ENCODE measurements at regions of chr7 and their contacts with region 1.

Region 1: GRCh38 chr7:2104107-2104710 is 128.5 kb downstream of the MAD1L1 start:
- DNase-seq: peak; percentile 50 to 90 (median 72)
- ATAC-seq: peak; percentile 79
- H3K4me3 ChIP-seq: peak overlapping the region in 1 of 2 experiments; percentile 0
- H3K4me3 Mint-ChIP-seq: peak overlapping the region; percentile 59
- H3K27ac ChIP-seq: no peak overlapping the region
- H3K27ac Mint-ChIP-seq: peak overlapping the region; percentile 76
- H3K4me1 ChIP-seq: peaks cover 25% of the 10 kb centered on the region
- H3K4me1 Mint-ChIP-seq: peaks cover 33% of the 10 kb centered on the region
- H3K27me3 ChIP-seq: no peaks in the 10 kb centered on the region
- H3K27me3 Mint-ChIP-seq: no peaks in the 10 kb centered on the region
- CTCF ChIP-seq: peak; percentile 43

Region 2: DNA sequence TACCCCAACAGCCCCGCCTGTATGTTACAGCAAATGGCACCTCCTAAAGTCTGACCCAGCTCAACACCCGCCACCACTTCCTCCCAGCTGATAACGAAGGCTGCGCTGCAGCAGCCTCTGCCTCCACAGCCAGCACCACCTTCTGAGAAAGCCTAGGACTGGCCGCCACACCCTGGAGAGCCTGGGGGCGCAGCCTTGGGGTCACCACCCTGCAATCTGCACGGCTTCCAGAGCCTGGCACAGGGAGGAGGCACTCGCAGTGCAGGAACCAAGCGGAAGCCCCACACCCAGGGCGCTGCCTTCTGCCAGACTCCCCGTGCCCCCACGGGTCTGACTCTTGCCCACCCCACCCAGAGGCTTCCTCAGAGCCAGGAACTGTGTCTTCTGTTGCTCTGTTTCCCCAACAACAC is 16.0 kb after region 1 on chr7:
- CTCF ChIA-PET with region 1: interaction called, 18 read pairs
- POLR2A ChIA-PET with region 1: no interaction called
- intact Hi-C with region 1: loop called in 1 of 2 experiments (anchors 2 kb)
- DNase-seq: peak; percentile 36 to 85 (median 66)
- ATAC-seq: peak; percentile 92
- H3K4me3 ChIP-seq: peak overlapping the region; percentile 19 to 39
- H3K4me3 Mint-ChIP-seq: peak overlapping the region; percentile 75
- H3K27ac ChIP-seq: peak overlapping the region; percentile 4 to 66
- H3K27ac Mint-ChIP-seq: peak overlapping the region; percentile 97
- H3K4me1 ChIP-seq: peaks cover 34% of the 10 kb centered on the region
- H3K4me1 Mint-ChIP-seq: peaks cover 47% of the 10 kb centered on the region
- H3K27me3 ChIP-seq: no peaks in the 10 kb centered on the region
- H3K27me3 Mint-ChIP-seq: no peaks in the 10 kb centered on the region
- CTCF ChIP-seq: no peak

Region 3: DNA sequence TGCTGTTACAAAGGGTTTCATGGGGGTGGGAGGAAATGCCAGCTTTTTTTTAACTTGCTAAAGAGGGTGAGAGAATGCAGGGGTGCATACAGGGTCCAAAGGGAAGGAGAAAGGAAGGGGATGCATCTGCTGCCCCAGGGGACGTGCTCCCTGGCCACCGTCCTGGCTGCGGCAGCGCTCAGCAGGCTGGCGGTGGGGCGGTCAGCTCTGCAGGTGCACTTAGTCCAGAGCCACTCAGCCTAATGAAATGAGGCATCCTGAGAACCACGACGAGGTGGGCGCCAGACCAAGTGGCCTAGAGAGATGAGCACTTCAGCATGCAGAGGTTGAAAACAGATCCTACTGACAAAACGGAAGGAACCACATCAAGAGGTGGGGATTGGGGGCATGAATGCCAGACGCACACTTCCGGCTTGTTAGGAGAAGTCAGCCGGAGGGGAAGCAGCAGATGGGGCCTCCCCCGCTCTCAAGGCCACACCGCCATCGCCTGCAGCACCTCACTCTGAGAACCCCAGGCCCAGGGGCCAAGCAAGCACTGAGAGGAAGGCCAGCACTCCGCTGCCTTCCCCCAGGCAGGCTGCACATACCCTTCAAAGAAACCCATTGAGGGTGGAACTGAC is 34.0 kb after region 1 on chr7:
- CTCF ChIA-PET with region 1: no interaction called
- POLR2A ChIA-PET with region 1: no interaction called
- intact Hi-C with region 1: loop called in 1 of 2 experiments (anchors 2 kb)
- DNase-seq: peak; percentile 46 to 82 (median 65)
- ATAC-seq: peak; percentile 92
- H3K4me3 ChIP-seq: peak overlapping the region; percentile 26 to 46
- H3K4me3 Mint-ChIP-seq: peak overlapping the region; percentile 71
- H3K27ac ChIP-seq: peak overlapping the region; percentile 50 to 52
- H3K27ac Mint-ChIP-seq: peak overlapping the region; percentile 89
- H3K4me1 ChIP-seq: peaks cover 15% of the 10 kb centered on the region
- H3K4me1 Mint-ChIP-seq: peaks cover 11% of the 10 kb centered on the region
- H3K27me3 ChIP-seq: no peaks in the 10 kb centered on the region
- H3K27me3 Mint-ChIP-seq: no peaks in the 10 kb centered on the region
- CTCF ChIP-seq: no peak

Region 4: DNA sequence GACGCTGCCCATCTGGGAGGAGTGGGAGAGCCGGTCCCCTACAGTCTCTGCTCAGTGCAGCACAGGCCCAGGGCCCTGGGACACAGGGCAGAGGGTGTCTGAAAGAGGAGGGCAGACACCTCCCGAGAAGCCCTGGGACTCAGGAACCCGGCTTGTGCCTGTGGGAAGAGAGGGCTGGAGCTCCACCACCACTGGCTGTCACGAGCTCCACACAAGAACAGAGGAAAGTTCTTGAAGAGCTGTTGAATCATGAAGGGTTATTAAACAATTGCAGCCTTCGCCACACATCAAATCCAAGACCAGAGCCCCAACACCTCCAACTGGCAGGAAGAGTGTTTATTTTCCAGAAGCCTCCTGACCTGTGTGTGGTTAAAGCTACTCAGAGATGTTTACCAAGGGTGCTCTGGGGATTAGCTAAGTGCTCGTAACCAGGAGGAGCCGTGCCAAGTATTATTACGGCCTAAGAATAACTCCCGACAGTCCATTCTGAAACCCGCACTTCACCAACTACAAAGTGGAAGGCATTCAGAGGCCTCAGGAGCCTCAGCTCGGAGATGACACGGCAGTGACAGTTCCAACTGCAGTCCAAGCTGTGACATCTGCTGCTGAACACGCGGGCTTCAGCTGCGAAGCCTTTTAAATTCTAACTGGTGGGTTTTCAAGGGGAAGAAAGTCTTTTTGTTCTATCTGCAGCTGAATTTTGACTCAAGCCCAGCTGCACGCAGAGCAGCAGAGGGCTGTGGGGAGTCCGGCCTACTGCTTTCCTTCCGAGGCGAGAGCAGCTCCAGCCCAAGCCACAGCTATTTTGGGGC is 53.5 kb after region 1 on chr7:
- CTCF ChIA-PET with region 1: no interaction called
- POLR2A ChIA-PET with region 1: interaction called, 3 read pairs
- intact Hi-C with region 1: loop called in 1 of 2 experiments (anchors 5 kb)
- DNase-seq: no peak
- ATAC-seq: no peak
- H3K4me3 ChIP-seq: no peak overlapping the region
- H3K4me3 Mint-ChIP-seq: no peak overlapping the region
- H3K27ac ChIP-seq: no peak overlapping the region
- H3K27ac Mint-ChIP-seq: no peak overlapping the region
- H3K4me1 ChIP-seq: no peaks in the 10 kb centered on the region
- H3K4me1 Mint-ChIP-seq: no peaks in the 10 kb centered on the region
- H3K27me3 ChIP-seq: no peaks in the 10 kb centered on the region
- H3K27me3 Mint-ChIP-seq: no peaks in the 10 kb centered on the region
- CTCF ChIP-seq: no peak

Region 5: GRCh38 chr7:2209146-2209960 is 105.1 kb after region 1 on chr7:
- CTCF ChIA-PET with region 1: interaction called, 3 read pairs
- POLR2A ChIA-PET with region 1: no interaction called
- intact Hi-C with region 1: loop called in 1 of 2 experiments (anchors 2 kb)
- DNase-seq: peak; percentile 14 to 67 (median 46)
- ATAC-seq: peak; percentile 52
- H3K4me3 ChIP-seq: no peak overlapping the region
- H3K4me3 Mint-ChIP-seq: no peak overlapping the region
- H3K27ac ChIP-seq: no peak overlapping the region
- H3K27ac Mint-ChIP-seq: no peak overlapping the region
- H3K4me1 ChIP-seq: no peaks in the 10 kb centered on the region
- H3K4me1 Mint-ChIP-seq: no peaks in the 10 kb centered on the region
- H3K27me3 ChIP-seq: no peaks in the 10 kb centered on the region
- H3K27me3 Mint-ChIP-seq: no peaks in the 10 kb centered on the region
- CTCF ChIP-seq: no peak

Region 6: GRCh38 chr7:2321020-2321419 is 216.8 kb after region 1 on chr7:
- CTCF ChIA-PET with region 1: no interaction called
- POLR2A ChIA-PET with region 1: no interaction called
- intact Hi-C with region 1: no loop called
- DNase-seq: no peak
- ATAC-seq: no peak
- H3K4me3 ChIP-seq: no peak overlapping the region
- H3K4me3 Mint-ChIP-seq: no peak overlapping the region
- H3K27ac ChIP-seq: no peak overlapping the region
- H3K27ac Mint-ChIP-seq: no peak overlapping the region
- H3K4me1 ChIP-seq: no peaks in the 10 kb centered on the region
- H3K4me1 Mint-ChIP-seq: no peaks in the 10 kb centered on the region
- H3K27me3 ChIP-seq: peaks cover 0 to 3% of the 10 kb centered on the region in 2 experiments
- H3K27me3 Mint-ChIP-seq: peaks cover 5% of the 10 kb centered on the region
- CTCF ChIP-seq: no peak

Region 7: DNA sequence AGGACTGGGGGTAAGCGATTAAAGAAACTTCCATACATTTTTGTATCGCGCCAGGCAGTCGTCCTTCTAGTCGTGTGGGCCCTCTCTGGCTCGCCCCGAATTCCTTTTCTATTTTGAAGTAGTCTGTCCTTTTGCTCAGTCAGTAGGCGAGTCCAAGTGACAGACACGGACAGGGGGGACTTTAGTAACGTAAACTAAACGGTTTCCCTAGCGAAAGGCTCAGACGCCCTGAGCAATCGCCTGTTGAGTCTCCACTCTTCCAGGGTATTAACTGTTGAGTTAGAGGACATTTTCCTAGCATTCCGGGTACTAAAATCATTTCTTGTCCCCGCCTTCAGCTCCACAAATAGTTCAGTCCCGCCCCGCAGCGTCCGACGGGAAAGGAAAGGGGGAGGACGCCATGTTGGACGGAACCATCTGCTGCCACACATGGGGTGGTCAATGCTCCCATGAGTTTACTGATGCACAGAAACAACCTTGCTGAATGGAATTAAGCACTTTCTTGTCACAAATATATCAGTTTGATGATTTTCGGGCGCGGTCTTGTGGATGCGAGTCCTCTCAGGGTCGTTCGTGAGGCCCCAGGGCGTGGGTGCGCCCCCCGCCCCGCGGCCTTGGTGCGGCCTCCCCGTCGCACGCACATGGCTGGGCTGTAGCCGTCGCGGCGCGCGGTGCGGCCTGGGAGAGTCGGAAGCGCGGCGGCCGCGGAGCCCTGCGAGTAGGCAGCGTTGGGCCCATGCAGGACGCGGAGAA is 250.2 kb after region 1 on chr7 and contains the start of gene EIF3B:
- CTCF ChIA-PET with region 1: no interaction called
- POLR2A ChIA-PET with region 1: no interaction called
- intact Hi-C with region 1: loop called in 1 of 2 experiments (anchors 2 kb)
- DNase-seq: peak; percentile 80 to 97 (median 90)
- ATAC-seq: peak; percentile 84
- H3K4me3 ChIP-seq: peak within 1 kb of the TSS; percentile 72 to 74
- H3K4me3 Mint-ChIP-seq: peak within 1 kb of the TSS; percentile 88
- H3K27ac ChIP-seq: peak within 1 kb of the TSS; percentile 99
- H3K27ac Mint-ChIP-seq: peak within 1 kb of the TSS; percentile 99
- H3K4me1 ChIP-seq: peaks cover 45% of the 10 kb centered on the region
- H3K4me1 Mint-ChIP-seq: peaks cover 40% of the 10 kb centered on the region
- H3K27me3 ChIP-seq: no peaks in the 10 kb centered on the region
- H3K27me3 Mint-ChIP-seq: no peaks in the 10 kb centered on the region
- CTCF ChIP-seq: no peak
- total RNA-seq, gene EIF3B: 234 to 239 TPM

Measured in CD8-positive, alpha-beta T cell (primary cell).